ENCODE measurements at regions of chr16 and their contacts with region 1.

Region 1: GRCh38 chr16:50210266-50211038 is 55.9 kb upstream of the ADCY7 start:
- DNase-seq: no peak
- ATAC-seq: peak; percentile 83
- H3K4me3 Mint-ChIP-seq: no peak overlapping the region
- H3K27ac Mint-ChIP-seq: peak overlapping the region; percentile 59
- H3K4me1 Mint-ChIP-seq: peaks cover 35% of the 10 kb centered on the region
- H3K27me3 Mint-ChIP-seq: no peaks in the 10 kb centered on the region
- CTCF ChIP-seq: no peak

Region 2: GRCh38 chr16:49800876-49801275 is 409.6 kb before region 1 on chr16:
- CTCF ChIA-PET with region 1: no interaction called
- POLR2A ChIA-PET with region 1: no interaction called
- intact Hi-C with region 1: no loop called
- DNase-seq: no peak
- ATAC-seq: no peak
- H3K4me3 Mint-ChIP-seq: no peak overlapping the region
- H3K27ac Mint-ChIP-seq: no peak overlapping the region
- H3K4me1 Mint-ChIP-seq: no peaks in the 10 kb centered on the region
- H3K27me3 Mint-ChIP-seq: no peaks in the 10 kb centered on the region
- CTCF ChIP-seq: no peak

Region 3: GRCh38 chr16:50065624-50066481 is 144.6 kb before region 1 on chr16 and contains the start of gene HEATR3:
- CTCF ChIA-PET with region 1: interaction called, 12 read pairs
- POLR2A ChIA-PET with region 1: interaction called, 3 read pairs
- intact Hi-C with region 1: loop called (anchors 1 kb)
- DNase-seq: peak; percentile 92
- ATAC-seq: peak; percentile 85
- H3K4me3 Mint-ChIP-seq: peak within 1 kb of the TSS; percentile 90
- H3K27ac Mint-ChIP-seq: peak within 1 kb of the TSS; percentile 90
- H3K4me1 Mint-ChIP-seq: peaks cover 31% of the 10 kb centered on the region
- H3K27me3 Mint-ChIP-seq: no peaks in the 10 kb centered on the region
- CTCF ChIP-seq: no peak
- total RNA-seq, gene HEATR3: 16.1 and 17.8 TPM in 2 replicates

Region 4: DNA sequence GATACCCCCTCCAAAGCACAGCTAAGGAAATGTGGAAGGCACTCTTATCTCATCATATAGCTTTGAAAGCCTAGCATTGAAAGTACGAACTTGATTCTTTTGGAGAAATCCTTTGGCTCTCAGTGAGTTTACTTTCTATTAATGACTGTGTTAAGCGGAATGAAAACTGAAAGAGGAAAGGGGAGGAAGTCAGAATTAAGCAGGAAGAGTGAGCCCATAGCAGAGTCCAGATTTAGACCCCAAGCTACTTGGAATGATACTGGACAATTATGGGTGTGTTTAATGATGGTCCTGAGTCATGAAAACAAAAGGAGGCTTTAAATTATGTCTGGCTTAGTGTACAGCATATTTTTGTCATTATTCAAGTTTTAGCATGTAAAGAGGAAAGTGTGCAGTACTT is 15.2 kb before region 1 on chr16:
- CTCF ChIA-PET with region 1: interaction called, 6 read pairs
- POLR2A ChIA-PET with region 1: interaction called, 5 read pairs
- intact Hi-C with region 1: loop called (anchors 2 kb)
- DNase-seq: no peak
- ATAC-seq: no peak
- H3K4me3 Mint-ChIP-seq: peak overlapping the region; percentile 11
- H3K27ac Mint-ChIP-seq: no peak overlapping the region
- H3K4me1 Mint-ChIP-seq: peaks cover 66% of the 10 kb centered on the region
- H3K27me3 Mint-ChIP-seq: no peaks in the 10 kb centered on the region
- CTCF ChIP-seq: no peak

Region 5: GRCh38 chr16:50354629-50355456 is 144.4 kb after region 1 on chr16:
- CTCF ChIA-PET with region 1: interaction called, 105 read pairs
- POLR2A ChIA-PET with region 1: no interaction called
- intact Hi-C with region 1: loop called (anchors 1 kb)
- DNase-seq: no peak
- ATAC-seq: no peak
- H3K4me3 Mint-ChIP-seq: no peak overlapping the region
- H3K27ac Mint-ChIP-seq: no peak overlapping the region
- H3K4me1 Mint-ChIP-seq: peaks cover 12% of the 10 kb centered on the region
- H3K27me3 Mint-ChIP-seq: no peaks in the 10 kb centered on the region
- CTCF ChIP-seq: peak; percentile 75

Region 6: DNA sequence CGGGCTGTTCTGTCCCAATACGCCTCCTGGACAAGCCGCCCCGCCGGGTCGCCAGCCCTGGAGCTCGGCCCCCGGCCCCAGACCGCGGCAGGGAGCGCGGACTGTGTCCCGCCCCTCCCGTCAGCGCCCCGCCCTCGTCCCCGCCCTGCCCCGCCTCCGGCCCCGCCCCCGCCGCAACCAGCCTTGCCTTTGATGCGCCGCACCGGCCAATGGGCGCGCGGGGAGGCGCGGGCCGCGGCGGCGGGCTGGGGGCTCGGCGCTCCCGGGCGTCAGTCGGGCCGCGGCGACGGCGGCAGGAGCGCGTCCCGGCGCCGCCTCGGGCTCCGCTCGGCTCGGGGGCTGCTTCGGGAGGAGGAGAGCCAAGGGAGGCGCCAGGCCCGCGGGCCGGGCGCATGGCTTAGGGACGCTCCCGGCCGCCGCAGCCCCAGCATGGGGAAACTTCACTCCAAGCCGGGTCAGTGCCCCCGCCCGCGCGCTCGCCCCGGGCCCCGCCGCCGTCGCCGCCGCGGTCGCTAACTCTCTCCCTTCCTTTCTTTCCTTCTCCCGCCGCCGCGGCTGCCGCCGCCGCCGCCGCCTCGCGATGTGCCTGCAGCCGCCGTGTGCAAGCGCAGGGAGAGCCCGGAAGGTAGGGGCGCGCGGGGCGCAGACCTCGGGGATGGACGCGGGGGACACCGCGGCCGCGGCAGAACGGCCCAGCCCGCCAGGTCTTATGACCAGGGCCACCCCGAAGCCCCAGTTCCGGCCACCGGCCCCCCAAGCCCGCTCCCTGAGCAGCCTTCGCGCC is 337.9 kb after region 1 on chr16 and contains the start of gene NKD1:
- CTCF ChIA-PET with region 1: no interaction called
- POLR2A ChIA-PET with region 1: no interaction called
- intact Hi-C with region 1: loop called (anchors 10 kb)
- DNase-seq: peak; percentile 72
- ATAC-seq: peak; percentile 88
- H3K4me3 Mint-ChIP-seq: peak within 1 kb of the TSS; percentile 91
- H3K27ac Mint-ChIP-seq: peak within 1 kb of the TSS; percentile 70
- H3K4me1 Mint-ChIP-seq: peaks cover 7% of the 10 kb centered on the region
- H3K27me3 Mint-ChIP-seq: peaks cover 10% of the 10 kb centered on the region
- CTCF ChIP-seq: no peak
- total RNA-seq, gene NKD1: 0.49 and 1.5 TPM in 2 replicates

Region 7: DNA sequence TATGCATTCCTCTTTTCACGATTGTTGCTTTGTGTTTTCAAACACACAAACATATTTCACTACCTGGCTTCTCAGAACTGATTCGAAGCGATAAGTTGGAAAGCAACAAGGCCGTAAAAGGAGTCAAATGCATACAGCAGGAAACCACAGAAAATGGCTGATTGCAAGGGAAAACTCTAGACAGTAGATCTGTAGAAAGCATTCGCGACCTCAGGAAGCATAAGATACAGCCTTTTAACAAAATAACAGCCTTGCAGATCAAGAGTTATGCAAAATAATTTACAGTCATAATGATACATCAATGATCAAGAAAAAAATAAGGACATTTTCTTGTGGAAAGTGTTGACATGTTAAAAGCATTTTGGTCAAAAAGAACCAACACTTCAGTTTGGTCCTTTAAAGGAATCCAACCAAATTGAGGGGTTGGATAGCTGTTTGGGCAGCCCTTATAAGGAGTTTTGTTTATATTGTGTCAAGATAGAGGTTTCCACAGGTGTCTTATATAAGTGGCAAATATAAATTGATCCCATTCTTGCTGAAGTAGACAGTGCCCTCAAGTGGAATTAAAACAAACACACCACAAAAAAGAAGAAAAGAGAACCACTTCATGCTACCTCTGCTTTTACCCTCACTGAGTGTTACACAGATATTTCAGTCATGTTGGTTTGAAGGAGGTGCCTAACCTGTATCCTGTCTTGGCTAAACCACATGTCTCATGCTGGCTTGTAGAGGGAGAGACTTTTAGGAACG is 536.9 kb after region 1 on chr16:
- CTCF ChIA-PET with region 1: interaction called, 3 read pairs
- POLR2A ChIA-PET with region 1: no interaction called
- intact Hi-C with region 1: loop called (anchors 2 kb)
- DNase-seq: no peak
- ATAC-seq: peak; percentile 61
- H3K4me3 Mint-ChIP-seq: peak overlapping the region; percentile 45
- H3K27ac Mint-ChIP-seq: peak overlapping the region; percentile 11
- H3K4me1 Mint-ChIP-seq: peaks cover 53% of the 10 kb centered on the region
- H3K27me3 Mint-ChIP-seq: no peaks in the 10 kb centered on the region
- CTCF ChIP-seq: no peak